Transverse colon (tissue), 4 donors: ENCODE measurements at regions of chr3 and their contacts with region 1.

Region 1: DNA sequence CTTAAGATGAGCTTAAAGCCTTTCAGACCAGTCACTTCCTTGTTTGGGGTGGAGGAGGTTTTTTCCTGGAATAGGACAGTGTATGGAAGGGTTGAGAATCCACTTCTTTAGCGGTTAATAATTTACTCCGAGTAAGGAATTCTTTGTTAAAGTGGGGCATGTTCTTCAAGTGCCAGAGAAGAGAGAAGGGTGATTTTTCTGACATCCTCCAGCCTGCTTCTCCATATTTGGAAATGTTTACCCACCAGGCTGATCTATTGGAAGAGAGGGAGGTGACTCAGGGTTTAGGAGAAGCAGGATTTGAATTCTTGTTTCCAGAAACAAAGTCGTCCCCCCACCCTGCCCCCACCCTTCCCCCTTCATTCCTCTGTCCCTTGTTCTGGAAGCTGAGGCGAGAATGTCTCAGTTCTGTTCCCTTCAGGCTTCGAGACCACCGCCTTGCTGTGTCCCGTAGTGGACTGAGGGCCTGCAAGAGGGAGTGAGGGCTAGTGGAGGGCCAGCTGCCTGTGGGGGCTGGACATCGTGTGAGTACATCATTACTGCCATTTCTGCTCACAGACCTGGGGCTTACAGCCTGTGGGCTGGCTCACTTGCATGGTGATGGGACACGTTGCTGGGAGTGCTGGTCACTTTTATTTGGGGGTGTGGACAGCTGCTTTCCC is 58.5 kb downstream of the LPP start:
- DNase-seq: no peak
- H3K4me3 ChIP-seq: peak overlapping the region in 3 of 4 donors; percentile 8 to 36 (median 29)
- H3K27ac ChIP-seq: peak overlapping the region; percentile 85 to 92 (median 86)
- H3K4me1 ChIP-seq: peaks cover 26 to 51% (median 49%) of the 10 kb centered on the region in 4 donors
- H3K27me3 ChIP-seq: no peaks in the 10 kb centered on the region
- CTCF ChIP-seq: no peak
- EP300 ChIP-seq: peak; percentile 69
- POLR2A ChIP-seq: peak; percentile 38

Region 2: DNA sequence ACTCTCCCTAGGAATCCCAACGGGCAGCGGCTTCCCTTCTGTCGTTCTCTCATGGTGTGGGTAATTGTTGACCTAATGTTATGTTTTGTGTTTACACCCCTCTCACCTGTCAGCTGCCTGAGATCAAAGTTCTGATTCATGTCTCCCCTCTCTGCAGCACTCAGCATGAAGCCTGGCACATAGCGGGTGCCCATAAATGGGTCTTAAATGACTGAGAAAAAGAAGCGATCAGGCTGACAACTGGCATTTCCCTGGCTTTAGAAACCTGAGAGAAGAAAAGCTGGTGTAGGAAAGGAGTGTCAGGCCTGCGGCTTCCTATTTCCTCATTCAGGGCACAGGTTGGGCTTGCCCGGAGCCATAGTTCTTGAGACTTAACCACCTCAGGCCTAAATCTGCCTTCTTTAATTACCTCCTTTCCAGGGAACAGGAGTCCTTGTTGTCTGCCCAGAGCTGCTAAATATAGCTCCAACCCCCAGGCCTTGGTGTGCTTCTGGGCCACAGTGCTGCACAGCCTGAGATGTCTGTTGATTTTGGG is 26.7 kb before region 1 on chr3:
- in situ Hi-C with region 1: no loop called
- intact Hi-C with region 1: loop called (anchors 1 kb)
- DNase-seq: peak; percentile 62
- H3K4me3 ChIP-seq: peak overlapping the region in 1 of 4 donors; percentile 16
- H3K27ac ChIP-seq: peak overlapping the region; percentile 82 to 96 (median 86)
- H3K4me1 ChIP-seq: peaks cover 25 to 72% (median 47%) of the 10 kb centered on the region in 4 donors
- H3K27me3 ChIP-seq: no peaks in the 10 kb centered on the region
- CTCF ChIP-seq: no peak
- EP300 ChIP-seq: no peak
- POLR2A ChIP-seq: no peak

Region 3: GRCh38 chr3:188197388-188197847 is 15.0 kb before region 1 on chr3:
- in situ Hi-C with region 1: no loop called
- intact Hi-C with region 1: no loop called
- DNase-seq: no peak
- H3K4me3 ChIP-seq: no peak overlapping the region
- H3K27ac ChIP-seq: peak overlapping the region; percentile 45 to 78 (median 70)
- H3K4me1 ChIP-seq: peaks cover 19 to 60% (median 36%) of the 10 kb centered on the region in 4 donors
- H3K27me3 ChIP-seq: no peaks in the 10 kb centered on the region
- CTCF ChIP-seq: no peak
- EP300 ChIP-seq: no peak
- POLR2A ChIP-seq: no peak

Region 4: GRCh38 chr3:188244395-188244861 is 32.0 kb after region 1 on chr3:
- in situ Hi-C with region 1: no loop called
- intact Hi-C with region 1: no loop called
- DNase-seq: no peak
- H3K4me3 ChIP-seq: no peak overlapping the region
- H3K27ac ChIP-seq: peak overlapping the region; percentile 45 to 68 (median 60)
- H3K4me1 ChIP-seq: peaks cover 13 to 89% (median 56%) of the 10 kb centered on the region in 4 donors
- H3K27me3 ChIP-seq: no peaks in the 10 kb centered on the region
- CTCF ChIP-seq: no peak
- EP300 ChIP-seq: no peak
- POLR2A ChIP-seq: no peak

Region 5: GRCh38 chr3:188947401-188948280 is 735.2 kb after region 1 on chr3:
- in situ Hi-C with region 1: no loop called
- intact Hi-C with region 1: loop called (anchors 10 kb)
- DNase-seq: peak; percentile 91
- H3K4me3 ChIP-seq: peak overlapping the region in 3 of 4 donors; percentile 27 to 50 (median 29)
- H3K27ac ChIP-seq: peak overlapping the region; percentile 83 to 95 (median 92)
- H3K4me1 ChIP-seq: peaks cover 11 to 49% (median 45%) of the 10 kb centered on the region in 4 donors
- H3K27me3 ChIP-seq: no peaks in the 10 kb centered on the region
- CTCF ChIP-seq: peak; percentile 38 to 72 (median 41)
- EP300 ChIP-seq: peak; percentile 100
- POLR2A ChIP-seq: peak; percentile 33